ENCODE measurements at regions of chr11 and their contacts with region 1.

Region 1: DNA sequence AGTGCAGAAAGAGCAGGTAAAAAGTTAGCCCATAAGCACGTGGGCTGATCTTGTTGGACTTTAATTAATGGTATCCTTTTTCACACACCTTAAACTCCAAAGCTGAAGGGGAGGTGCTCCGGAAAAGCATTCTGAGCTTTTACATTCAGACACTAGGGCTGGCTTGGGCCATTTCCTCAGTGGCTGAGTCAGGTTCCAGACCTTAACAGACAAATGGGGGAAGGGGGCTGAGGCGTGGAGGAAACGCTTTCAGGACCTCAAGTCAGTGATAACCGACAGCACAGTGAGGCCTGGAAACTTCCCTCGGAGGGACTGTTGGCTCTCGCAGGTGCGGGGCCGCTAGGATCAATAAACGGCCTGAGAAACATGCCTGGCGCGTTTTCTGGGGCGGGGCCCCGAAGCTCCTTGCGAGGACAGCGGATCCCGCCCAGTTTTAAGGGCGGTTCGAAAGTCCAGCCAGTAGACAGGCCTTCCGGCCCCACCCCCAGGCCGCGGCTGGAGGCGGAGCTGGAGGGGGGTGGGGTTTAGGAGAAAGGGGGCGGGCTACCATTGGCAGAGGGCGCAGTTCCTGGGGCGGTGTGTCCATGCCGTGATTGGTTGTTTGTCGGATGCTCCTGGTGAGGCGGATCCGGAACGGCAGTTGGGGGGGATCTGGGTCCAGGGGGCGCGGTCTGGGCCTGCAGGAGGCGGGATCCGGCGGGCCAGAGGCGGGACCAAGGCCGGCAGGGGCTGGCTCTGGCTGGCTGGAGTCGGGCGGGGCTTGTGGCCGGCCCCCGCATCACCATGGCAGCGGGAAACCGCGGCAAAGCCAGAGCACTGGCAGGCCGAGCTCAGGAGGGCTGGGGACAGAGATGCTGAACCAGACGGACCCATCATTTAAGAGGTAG is 8.0 kb downstream of the C11orf52 start:
- DNase-seq: peak; percentile 94 to 98 (median 96)
- H3K4me3 ChIP-seq: peak overlapping the region; percentile 60 to 73
- H3K4me3 Mint-ChIP-seq: peak overlapping the region; percentile 81 to 90 (median 88)
- H3K27ac ChIP-seq: peak overlapping the region; percentile 69
- H3K27ac Mint-ChIP-seq: peak overlapping the region; percentile 92 to 97 (median 95)
- H3K4me1 ChIP-seq: peaks cover 14% of the 10 kb centered on the region
- H3K4me1 Mint-ChIP-seq: peaks cover 6 to 22% (median 14%) of the 10 kb centered on the region in 4 donors
- H3K27me3 ChIP-seq: no peaks in the 10 kb centered on the region
- H3K27me3 Mint-ChIP-seq: peaks cover 0 to 2% of the 10 kb centered on the region in 2 donors

Region 2: GRCh38 chr11:111387363-111387762 is 539.4 kb before region 1 on chr11:
- CTCF ChIA-PET with region 1: no interaction called
- POLR2A ChIA-PET with region 1: no interaction called
- intact Hi-C with region 1: no loop called
- DNase-seq: no peak
- H3K4me3 ChIP-seq: no peak overlapping the region
- H3K4me3 Mint-ChIP-seq: no peak overlapping the region
- H3K27ac ChIP-seq: no peak overlapping the region
- H3K27ac Mint-ChIP-seq: no peak overlapping the region
- H3K4me1 ChIP-seq: no peaks in the 10 kb centered on the region
- H3K4me1 Mint-ChIP-seq: no peaks in the 10 kb centered on the region
- H3K27me3 ChIP-seq: no peaks in the 10 kb centered on the region
- H3K27me3 Mint-ChIP-seq: peaks cover 0 to 1% of the 10 kb centered on the region in 2 donors

Region 3: DNA sequence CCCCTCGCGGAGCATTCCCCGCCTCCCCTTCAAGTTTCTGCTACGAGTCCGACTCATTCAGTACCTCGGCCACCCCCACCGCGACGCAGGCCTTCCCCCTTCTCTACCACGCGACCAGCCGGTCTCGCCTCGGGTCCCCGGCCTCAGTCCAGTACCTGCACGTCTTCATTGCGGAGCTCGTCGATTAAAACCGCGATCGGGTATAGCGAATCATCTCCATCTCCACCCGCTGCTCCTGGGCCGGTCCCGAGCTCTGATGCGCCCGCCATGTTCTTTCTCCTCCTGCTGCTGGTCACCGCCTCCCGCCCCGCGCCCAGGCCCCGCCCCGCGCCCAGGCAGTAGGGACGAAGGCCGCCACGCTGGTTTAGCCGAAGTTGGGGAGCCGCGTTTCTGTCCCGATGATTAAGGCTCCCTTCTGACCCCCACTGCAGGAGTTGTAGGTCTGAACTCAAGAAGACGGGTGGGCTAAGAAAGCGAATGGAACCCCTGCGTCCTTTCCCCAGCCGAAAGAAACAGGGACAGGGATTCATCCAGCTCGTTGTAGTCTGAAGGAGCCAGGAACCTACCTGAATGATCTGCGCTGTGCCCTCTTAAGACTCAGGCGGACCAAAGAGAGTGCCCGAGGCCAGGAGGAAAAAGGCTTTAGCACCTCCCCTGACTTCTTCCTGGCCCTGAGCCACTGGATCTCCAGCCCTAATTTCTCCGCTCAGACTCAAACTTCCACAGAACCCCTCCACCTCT is 160.5 kb before region 1 on chr11 and contains the start of gene PPP2R1B:
- CTCF ChIA-PET with region 1: interaction called, 4 read pairs
- POLR2A ChIA-PET with region 1: interaction called, 6 read pairs
- intact Hi-C with region 1: loop called (anchors 2 kb)
- DNase-seq: peak; percentile 71 to 78 (median 75)
- H3K4me3 ChIP-seq: peak within 1 kb of the TSS; percentile 64 to 92
- H3K4me3 Mint-ChIP-seq: peak within 1 kb of the TSS; percentile 93 to 100 (median 100)
- H3K27ac ChIP-seq: peak within 1 kb of the TSS; percentile 84
- H3K27ac Mint-ChIP-seq: peak within 1 kb of the TSS; percentile 65 to 100 (median 99)
- H3K4me1 ChIP-seq: peaks cover 24% of the 10 kb centered on the region
- H3K4me1 Mint-ChIP-seq: peaks cover 29 to 50% (median 36%) of the 10 kb centered on the region in 4 donors
- H3K27me3 ChIP-seq: no peaks in the 10 kb centered on the region
- H3K27me3 Mint-ChIP-seq: peaks cover 0 to 2% of the 10 kb centered on the region in 2 donors
- total RNA-seq, gene PPP2R1B: 38.9 to 39.1 TPM

Region 4: GRCh38 chr11:111878849-111879636 is 47.7 kb before region 1 on chr11 and contains the starts of genes CFAP68 and FDXACB1:
- CTCF ChIA-PET with region 1: interaction called, 19 read pairs
- POLR2A ChIA-PET with region 1: interaction called, 20 read pairs
- intact Hi-C with region 1: loop called (anchors 1 kb)
- DNase-seq: peak; percentile 97 to 99 (median 98)
- H3K4me3 ChIP-seq: peak within 1 kb of the TSS; percentile 79 to 80
- H3K4me3 Mint-ChIP-seq: peak within 1 kb of the TSS; percentile 91 to 98 (median 95)
- H3K27ac ChIP-seq: peak within 1 kb of the TSS; percentile 95
- H3K27ac Mint-ChIP-seq: peak within 1 kb of the TSS; percentile 93 to 100 (median 100)
- H3K4me1 ChIP-seq: peaks cover 18% of the 10 kb centered on the region
- H3K4me1 Mint-ChIP-seq: peaks cover 11 to 28% (median 17%) of the 10 kb centered on the region in 4 donors
- H3K27me3 ChIP-seq: no peaks in the 10 kb centered on the region
- H3K27me3 Mint-ChIP-seq: no peaks in the 10 kb centered on the region
- total RNA-seq, gene CFAP68: 14.8 to 18.7 TPM
- total RNA-seq, gene FDXACB1: 3.9 to 4.0 TPM

Region 5: GRCh38 chr11:111982019-111982464 is 55.3 kb after region 1 on chr11:
- CTCF ChIA-PET with region 1: interaction called, 119 read pairs
- POLR2A ChIA-PET with region 1: interaction called, 5 read pairs
- intact Hi-C with region 1: loop called (anchors 1 kb)
- DNase-seq: peak; percentile 35 to 57 (median 38)
- H3K4me3 ChIP-seq: no peak overlapping the region
- H3K4me3 Mint-ChIP-seq: no peak overlapping the region
- H3K27ac ChIP-seq: no peak overlapping the region
- H3K27ac Mint-ChIP-seq: peak overlapping the region in 2 of 7 donors; percentile 19 to 25
- H3K4me1 ChIP-seq: peaks cover 7% of the 10 kb centered on the region
- H3K4me1 Mint-ChIP-seq: peaks cover 4 to 10% (median 8%) of the 10 kb centered on the region in 4 donors
- H3K27me3 ChIP-seq: no peaks in the 10 kb centered on the region
- H3K27me3 Mint-ChIP-seq: peaks cover 8 to 15% of the 10 kb centered on the region in 2 donors

Region 6: GRCh38 chr11:112074026-112074811 is 147.5 kb after region 1 on chr11 and contains the start of gene NKAPD1:
- CTCF ChIA-PET with region 1: interaction called, 4 read pairs
- POLR2A ChIA-PET with region 1: interaction called, 5 read pairs
- intact Hi-C with region 1: loop called (anchors 2 kb)
- DNase-seq: peak; percentile 85 to 90 (median 86)
- H3K4me3 ChIP-seq: peak within 1 kb of the TSS; percentile 96 to 97
- H3K4me3 Mint-ChIP-seq: peak within 1 kb of the TSS; percentile 85 to 97 (median 94)
- H3K27ac ChIP-seq: peak within 1 kb of the TSS; percentile 80
- H3K27ac Mint-ChIP-seq: peak within 1 kb of the TSS; percentile 79 to 98 (median 96)
- H3K4me1 ChIP-seq: peaks cover 23% of the 10 kb centered on the region
- H3K4me1 Mint-ChIP-seq: peaks cover 26 to 36% (median 30%) of the 10 kb centered on the region in 4 donors
- H3K27me3 ChIP-seq: no peaks in the 10 kb centered on the region
- H3K27me3 Mint-ChIP-seq: peaks cover 6 to 7% of the 10 kb centered on the region in 2 donors
- total RNA-seq, gene NKAPD1: 20.9 to 21.2 TPM

Region 7: DNA sequence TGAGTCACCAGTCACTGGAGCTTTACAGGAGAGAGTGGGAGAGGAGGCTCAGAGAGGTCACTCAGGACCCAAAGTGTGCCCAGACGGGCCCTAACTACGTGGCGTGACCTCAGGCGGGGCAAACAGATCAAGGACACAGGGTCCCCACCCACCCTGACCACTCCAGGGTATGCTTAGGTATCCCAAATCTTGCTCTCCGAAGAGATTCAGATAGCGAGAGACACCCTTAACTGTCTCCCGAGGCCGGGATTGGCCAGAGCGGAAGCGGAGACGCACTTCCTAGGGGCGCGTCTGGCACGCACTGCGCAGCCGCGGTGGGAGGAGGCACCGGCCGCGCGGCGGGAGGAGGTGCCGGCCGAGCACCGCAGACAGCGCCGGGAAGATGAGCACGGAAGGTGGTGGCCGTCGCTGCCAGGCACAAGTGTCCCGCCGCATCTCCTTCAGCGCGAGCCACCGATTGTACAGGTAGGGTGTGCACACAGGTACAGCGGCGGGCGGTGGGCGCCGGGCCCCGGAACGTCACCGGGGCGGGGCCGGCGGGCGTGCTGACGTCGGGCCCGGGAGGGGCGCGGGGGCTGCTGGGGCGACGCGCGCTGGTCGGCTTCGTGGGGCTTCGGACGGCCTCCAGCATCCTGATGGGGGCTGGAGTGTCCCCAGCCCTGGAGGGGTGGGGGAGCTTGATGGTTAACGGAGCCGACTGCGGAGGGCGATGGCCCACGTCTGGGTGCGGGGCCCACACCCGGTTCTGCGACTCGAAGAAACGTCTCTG is 299.5 kb after region 1 on chr11 and contains the start of gene PTS:
- CTCF ChIA-PET with region 1: interaction called, 6 read pairs
- POLR2A ChIA-PET with region 1: interaction called, 10 read pairs
- intact Hi-C with region 1: loop called (anchors 5 kb)
- DNase-seq: peak; percentile 81 to 91 (median 88)
- H3K4me3 ChIP-seq: peak within 1 kb of the TSS; percentile 98 to 100
- H3K4me3 Mint-ChIP-seq: peak within 1 kb of the TSS; percentile 92 to 96 (median 94)
- H3K27ac ChIP-seq: peak within 1 kb of the TSS; percentile 98
- H3K27ac Mint-ChIP-seq: peak within 1 kb of the TSS; percentile 96 to 99 (median 99)
- H3K4me1 ChIP-seq: peaks cover 15% of the 10 kb centered on the region
- H3K4me1 Mint-ChIP-seq: peaks cover 19 to 32% (median 22%) of the 10 kb centered on the region in 4 donors
- H3K27me3 ChIP-seq: no peaks in the 10 kb centered on the region
- H3K27me3 Mint-ChIP-seq: no peaks in the 10 kb centered on the region
- total RNA-seq, gene PTS: 23.6 to 26.9 TPM